ENCODE measurements at regions of chr1 and their contacts with region 1.

Region 1: DNA sequence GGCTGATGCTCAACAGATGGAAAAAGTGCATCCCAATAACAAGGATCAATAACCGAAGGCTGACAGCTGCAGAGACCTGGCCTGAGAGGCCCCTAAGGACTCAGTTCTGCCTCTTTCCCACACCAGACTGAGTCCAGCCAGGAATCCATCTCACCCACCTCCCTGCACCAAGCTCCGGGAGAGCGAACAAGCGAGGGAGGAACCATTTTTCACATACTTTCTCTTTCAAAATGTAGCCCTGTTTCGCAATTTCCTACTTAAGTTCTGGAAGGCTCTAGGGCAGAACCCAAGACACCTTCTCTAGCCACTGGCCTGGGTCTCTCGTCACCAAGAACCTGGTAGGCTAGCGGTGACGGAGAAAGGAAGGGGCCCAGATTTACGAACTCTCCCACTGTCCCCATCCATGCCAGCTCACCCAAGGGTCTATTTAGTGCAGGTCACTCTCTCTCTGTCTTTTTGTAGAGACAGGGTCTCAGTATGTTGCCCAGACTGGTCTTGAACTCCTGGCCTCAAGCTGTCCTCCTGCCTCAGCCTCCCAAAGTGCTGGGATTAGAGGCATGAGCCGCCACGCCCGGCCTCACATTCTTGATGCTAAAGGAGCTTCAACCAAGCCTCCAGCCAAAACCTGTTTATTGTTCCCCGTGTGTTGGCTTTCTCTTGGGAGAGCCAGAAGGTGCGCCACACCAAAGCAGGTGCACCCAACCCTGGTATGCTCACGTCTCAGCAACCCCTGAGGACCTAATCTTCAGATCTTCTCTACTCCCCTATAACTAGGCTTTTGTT is 10.9 kb upstream of the GNL2 start:
- DNase-seq: peak; percentile 82
- H3K4me3 ChIP-seq: peak overlapping the region; percentile 47
- H3K27ac ChIP-seq: peak overlapping the region; percentile 67
- H3K4me1 ChIP-seq: peaks cover 17% of the 10 kb centered on the region
- H3K27me3 ChIP-seq: no peaks in the 10 kb centered on the region

Region 2: DNA sequence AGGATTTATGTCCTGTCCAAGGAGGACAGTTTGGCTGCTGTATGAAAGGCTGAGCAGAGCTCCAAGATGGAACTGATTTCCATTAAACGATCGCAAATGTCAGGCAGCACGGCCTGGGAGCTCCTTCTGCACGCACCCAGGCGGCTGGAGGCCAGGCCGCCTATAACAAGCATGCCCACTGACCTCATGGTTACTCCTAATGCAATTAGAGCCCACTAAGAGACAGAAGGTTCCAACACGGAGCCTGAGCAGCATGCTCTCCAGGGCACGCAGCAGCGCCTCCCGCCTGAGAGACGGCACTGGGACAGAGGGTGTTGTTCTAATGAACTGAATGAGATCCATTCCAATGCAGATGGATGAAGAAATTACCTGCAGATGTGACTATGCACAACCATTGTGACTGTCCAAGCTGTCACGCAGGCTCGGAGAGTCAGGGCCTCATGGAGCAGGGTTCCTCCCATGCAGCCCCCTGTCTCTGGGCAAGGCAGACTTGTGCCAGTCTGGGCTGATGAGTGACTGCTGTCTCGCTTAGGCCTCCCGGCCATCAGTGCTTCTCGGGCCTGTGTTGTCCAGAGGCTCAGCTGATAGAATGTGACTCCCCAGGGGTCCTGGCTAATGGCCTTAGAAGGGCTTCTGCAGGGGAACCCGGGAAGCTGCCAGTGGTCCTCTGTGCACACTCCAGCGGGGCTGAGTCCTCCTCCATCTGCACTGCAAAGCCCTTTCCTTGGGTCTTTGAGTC is 60.5 kb after region 1 on chr1:
- in situ Hi-C with region 1: loop called (anchors 5 kb)
- DNase-seq: peak; percentile 38
- H3K4me3 ChIP-seq: no peak overlapping the region
- H3K27ac ChIP-seq: no peak overlapping the region
- H3K4me1 ChIP-seq: no peaks in the 10 kb centered on the region
- H3K27me3 ChIP-seq: peaks cover 20% of the 10 kb centered on the region